Activated CD8-positive, alpha-beta T cell treated with anti-CD3 and anti-CD28 coated beads for 36 hours (primary cell): ENCODE measurements at regions of chr17 and their contacts with region 1.

Region 1: GRCh38 chr17:38322091-38322779 is 21.5 kb downstream of the GPR179 start:
- DNase-seq: peak; percentile 83
- ATAC-seq: peak; percentile 95
- H3K4me3 Mint-ChIP-seq: no peak overlapping the region
- H3K27ac Mint-ChIP-seq: no peak overlapping the region
- H3K4me1 Mint-ChIP-seq: peaks cover 7% of the 10 kb centered on the region
- H3K27me3 Mint-ChIP-seq: no peaks in the 10 kb centered on the region
- CTCF ChIP-seq: peak; percentile 71

Region 2: GRCh38 chr17:38333635-38334295 is 11.5 kb after region 1 on chr17:
- CTCF ChIA-PET with region 1: interaction called, 49 read pairs
- POLR2A ChIA-PET with region 1: no interaction called
- intact Hi-C with region 1: no loop called
- DNase-seq: peak; percentile 77
- ATAC-seq: peak; percentile 91
- H3K4me3 Mint-ChIP-seq: no peak overlapping the region
- H3K27ac Mint-ChIP-seq: no peak overlapping the region
- H3K4me1 Mint-ChIP-seq: no peaks in the 10 kb centered on the region
- H3K27me3 Mint-ChIP-seq: no peaks in the 10 kb centered on the region
- CTCF ChIP-seq: peak; percentile 82

Region 3: GRCh38 chr17:38358586-38359513 is 36.6 kb after region 1 on chr17:
- CTCF ChIA-PET with region 1: interaction called, 11 read pairs
- POLR2A ChIA-PET with region 1: interaction called, 3 read pairs
- intact Hi-C with region 1: no loop called
- DNase-seq: no peak
- ATAC-seq: no peak
- H3K4me3 Mint-ChIP-seq: no peak overlapping the region
- H3K27ac Mint-ChIP-seq: no peak overlapping the region
- H3K4me1 Mint-ChIP-seq: peaks cover 34% of the 10 kb centered on the region
- H3K27me3 Mint-ChIP-seq: no peaks in the 10 kb centered on the region
- CTCF ChIP-seq: no peak

Region 4: DNA sequence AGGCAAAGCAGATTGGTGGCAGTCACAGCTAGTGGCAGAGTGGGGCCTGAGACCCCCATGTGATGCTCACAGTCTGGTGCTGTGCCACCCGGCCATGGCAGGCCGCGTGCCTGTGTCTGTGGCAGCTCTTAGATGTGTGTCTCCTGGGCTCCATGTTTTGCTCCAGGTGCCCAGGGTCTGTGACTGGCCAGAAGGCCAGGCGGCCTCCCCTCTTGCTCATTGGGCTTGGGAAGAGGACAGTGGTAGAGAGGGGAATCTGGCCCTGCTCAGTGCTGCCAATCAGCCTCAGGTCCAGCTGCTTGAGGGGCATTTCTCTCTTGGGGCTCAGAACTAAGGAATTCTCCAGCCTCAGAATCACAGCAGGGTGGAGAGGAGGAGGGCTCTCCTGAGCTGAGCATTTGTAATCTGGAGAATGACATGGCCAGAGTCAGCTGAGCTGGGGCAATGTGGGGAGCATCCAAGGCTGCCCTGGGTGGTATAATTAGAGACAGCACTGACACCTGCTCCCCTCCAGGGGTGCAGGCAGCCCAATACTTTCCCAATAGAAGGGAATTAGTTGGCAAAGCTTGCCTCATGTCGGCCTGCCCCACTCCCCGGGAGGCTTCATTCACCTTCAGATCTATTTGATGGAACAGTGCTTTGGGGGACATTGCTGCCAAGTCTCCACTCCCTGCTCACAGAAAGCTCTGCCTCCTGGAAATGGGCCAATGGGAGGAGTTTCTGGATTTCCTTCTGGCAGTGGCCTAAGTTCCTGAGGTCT is 600.5 kb after region 1 on chr17:
- CTCF ChIA-PET with region 1: no interaction called
- POLR2A ChIA-PET with region 1: no interaction called
- intact Hi-C with region 1: no loop called
- DNase-seq: no peak
- ATAC-seq: no peak
- H3K4me3 Mint-ChIP-seq: no peak overlapping the region
- H3K27ac Mint-ChIP-seq: peak overlapping the region; percentile 62
- H3K4me1 Mint-ChIP-seq: peaks cover 53% of the 10 kb centered on the region
- H3K27me3 Mint-ChIP-seq: no peaks in the 10 kb centered on the region
- CTCF ChIP-seq: no peak